ENCODE measurements at regions of chr9 and their contacts with region 1.

Region 1: GRCh38 chr9:93549611-93550010 is 26.8 kb upstream of the PHF2 start:
- DNase-seq: no peak
- ATAC-seq: peak in 2 of 8 donors; percentile 63 to 68
- H3K4me3 ChIP-seq: no peak overlapping the region
- H3K27ac ChIP-seq: peak overlapping the region in 2 of 10 donors; percentile 25 to 42
- H3K4me1 ChIP-seq: peaks cover 0 to 17% (median 0%) of the 10 kb centered on the region in 9 donors
- H3K27me3 ChIP-seq: no peaks in the 10 kb centered on the region
- CTCF ChIP-seq: no peak

Region 2: DNA sequence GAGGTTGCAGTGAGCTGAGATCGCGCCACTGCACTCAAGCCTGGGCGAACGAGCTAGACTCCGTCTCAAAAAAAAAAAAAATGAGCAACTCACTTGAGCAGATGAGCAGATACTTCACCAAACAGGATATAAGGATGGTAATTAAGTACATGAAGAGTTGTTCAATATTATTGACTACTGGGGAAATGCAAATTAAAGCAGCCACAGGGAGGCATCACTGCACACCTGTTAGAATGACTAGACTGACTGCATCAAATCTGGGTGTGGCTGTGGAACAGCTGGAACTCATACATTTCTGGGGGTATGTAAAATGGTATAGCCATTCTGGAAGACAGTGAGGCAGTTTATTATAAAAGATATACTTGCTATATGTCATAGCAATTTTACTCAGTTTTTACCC is 272.6 kb before region 1 on chr9:
- intact Hi-C with region 1: no loop called
- DNase-seq: no peak
- ATAC-seq: no peak
- H3K4me3 ChIP-seq: no peak overlapping the region
- H3K27ac ChIP-seq: no peak overlapping the region
- H3K4me1 ChIP-seq: no peaks in the 10 kb centered on the region
- H3K27me3 ChIP-seq: peaks cover 0 to 24% (median 0%) of the 10 kb centered on the region in 7 donors
- CTCF ChIP-seq: no peak

Region 3: GRCh38 chr9:93444301-93444700 is 105.3 kb before region 1 on chr9:
- intact Hi-C with region 1: loop called in 1 of 10 experiments (anchors 10 kb)
- DNase-seq: no peak
- ATAC-seq: no peak
- H3K4me3 ChIP-seq: no peak overlapping the region
- H3K27ac ChIP-seq: no peak overlapping the region
- H3K4me1 ChIP-seq: peaks cover 0 to 11% (median 3%) of the 10 kb centered on the region in 9 donors
- H3K27me3 ChIP-seq: no peaks in the 10 kb centered on the region
- CTCF ChIP-seq: no peak

Measured in heart right ventricle (tissue), 16 donors.